Dorsolateral prefrontal cortex (tissue), 120 donors: ENCODE measurements at regions of chr5 and their contacts with region 1.

Region 1: GRCh38 chr5:164504141-164504772 is 998.8 kb downstream of the MAT2B start:
- DNase-seq: peak in 3 of 10 donors; percentile 12 to 50 (median 14)
- H3K4me3 ChIP-seq: peak overlapping the region in 31 of 59 donors; percentile 6 to 45 (median 30)
- H3K27ac ChIP-seq: no peak overlapping the region
- H3K27me3 ChIP-seq: peaks cover 0 to 4% (median 0%) of the 10 kb centered on the region in 45 donors
- CTCF ChIP-seq: peak; percentile 75 to 96 (median 86)

Region 2: GRCh38 chr5:163565931-163566608 is 938.2 kb before region 1 on chr5:
- intact Hi-C with region 1: loop called (anchors 2 to 5 kb)
- DNase-seq: peak in 7 of 10 donors; percentile 26 to 53 (median 40)
- H3K4me3 ChIP-seq: peak overlapping the region; percentile 17 to 68 (median 52)
- H3K27ac ChIP-seq: peak overlapping the region in 54 of 59 donors; percentile 3 to 89 (median 72)
- H3K27me3 ChIP-seq: peaks cover 0 to 9% (median 0%) of the 10 kb centered on the region in 45 donors
- CTCF ChIP-seq: peak in 9 of 56 donors; percentile 4 to 19 (median 9)

Region 3: DNA sequence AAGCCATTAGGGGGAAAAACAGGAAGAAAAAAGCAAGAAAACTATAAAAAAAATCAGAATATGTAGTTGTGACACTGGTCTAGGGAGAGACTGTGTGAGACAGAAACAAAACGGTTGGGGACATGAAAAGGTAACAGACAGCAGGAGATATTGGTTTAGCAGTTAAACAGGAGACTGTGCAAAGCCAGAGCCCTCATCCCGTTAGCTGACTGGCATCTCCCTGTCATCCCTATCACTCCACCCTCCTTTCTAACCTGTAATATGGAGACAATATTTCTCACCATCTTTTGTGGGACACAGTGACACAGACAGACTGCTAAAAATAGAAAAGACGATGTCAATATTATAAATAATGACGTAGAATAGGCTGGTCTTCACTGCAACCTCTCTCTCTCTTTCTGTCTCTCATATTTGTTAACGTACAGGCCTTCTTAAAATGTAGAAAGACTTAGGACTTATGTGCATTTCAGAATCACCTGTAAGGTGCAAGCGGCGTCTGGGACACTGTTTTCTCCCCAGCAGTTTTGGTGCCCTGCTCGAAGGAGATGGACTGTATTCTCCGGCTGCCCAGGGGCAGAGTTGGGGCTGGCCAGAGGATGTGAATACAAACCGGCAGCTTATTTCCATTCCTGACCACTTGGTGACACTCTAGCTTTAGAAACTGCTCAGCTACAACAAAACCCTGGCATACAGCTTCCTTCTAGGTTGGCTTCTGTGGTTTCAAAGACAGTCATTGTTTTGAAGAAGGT is 808.3 kb before region 1 on chr5:
- intact Hi-C with region 1: loop called (anchors 5 to 10 kb)
- DNase-seq: peak in 8 of 10 donors; percentile 24 to 52 (median 43)
- H3K4me3 ChIP-seq: no peak overlapping the region
- H3K27ac ChIP-seq: peak overlapping the region in 1 of 59 donors; percentile 40
- H3K27me3 ChIP-seq: no peaks in the 10 kb centered on the region
- CTCF ChIP-seq: peak; percentile 27 to 78 (median 62)

Region 4: GRCh38 chr5:164013077-164013670 is 491.1 kb before region 1 on chr5:
- intact Hi-C with region 1: loop called (anchors 5 kb)
- DNase-seq: peak in 3 of 10 donors; percentile 6 to 45 (median 29)
- H3K4me3 ChIP-seq: no peak overlapping the region
- H3K27ac ChIP-seq: no peak overlapping the region
- H3K27me3 ChIP-seq: peaks cover 0 to 3% (median 0%) of the 10 kb centered on the region in 45 donors
- CTCF ChIP-seq: peak; percentile 52 to 89 (median 74)